ENCODE measurements at regions of chr12 and their contacts with region 1.

Region 1: DNA sequence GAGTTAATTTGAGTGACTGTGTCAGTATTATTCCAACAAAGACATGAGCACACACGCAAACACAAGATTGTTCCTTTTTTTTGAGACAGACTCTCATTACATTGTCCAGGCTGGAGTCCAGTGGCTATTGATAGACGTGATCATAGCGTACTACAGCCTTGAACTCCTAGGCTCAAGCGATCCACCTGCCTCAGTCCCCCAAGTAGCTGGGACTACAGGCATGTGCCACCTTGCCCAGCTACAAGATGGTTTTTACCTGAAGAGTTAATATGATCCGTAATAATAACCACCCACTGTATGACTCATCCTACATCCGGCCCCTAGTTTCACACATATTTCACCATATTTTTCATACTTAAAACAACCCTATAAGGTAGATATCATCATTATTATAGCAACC is 26.8 kb downstream of the BCAT1 start:
- DNase-seq: no peak
- ATAC-seq: peak; percentile 23
- H3K4me3 Mint-ChIP-seq: no peak overlapping the region
- H3K27ac Mint-ChIP-seq: peak overlapping the region; percentile 71
- H3K4me1 Mint-ChIP-seq: peaks cover 41% of the 10 kb centered on the region
- H3K27me3 Mint-ChIP-seq: peaks cover 6% of the 10 kb centered on the region

Region 2: GRCh38 chr12:24948757-24949722 is 26.9 kb after region 1 on chr12 and contains the start of gene BCAT1:
- CTCF ChIA-PET with region 1: interaction called, 4 read pairs
- POLR2A ChIA-PET with region 1: interaction called, 5 read pairs
- intact Hi-C with region 1: loop called (anchors 1 kb)
- DNase-seq: peak; percentile 71
- ATAC-seq: peak; percentile 45
- H3K4me3 Mint-ChIP-seq: peak within 1 kb of the TSS; percentile 74
- H3K27ac Mint-ChIP-seq: peak within 1 kb of the TSS; percentile 91
- H3K4me1 Mint-ChIP-seq: peaks cover 57% of the 10 kb centered on the region
- H3K27me3 Mint-ChIP-seq: peaks cover 49% of the 10 kb centered on the region
- total RNA-seq, gene BCAT1: 27.9 to 40.0 TPM

Measured in activated CD4-positive, alpha-beta T cell treated with anti-CD3 and anti-CD28 coated beads for 36 hours (primary cell).